IMR-90 (cell line): ENCODE measurements at regions of chr1 and their contacts with region 1.

Region 1: GRCh38 chr1:116377541-116378529 is 4.8 kb downstream of the ATP1A1 start:
- DNase-seq: peak; percentile 96
- ATAC-seq: peak; percentile 21
- H3K4me3 ChIP-seq: peak overlapping the region; percentile 31; the same call in 1 of the 2 replicates
- H3K27ac ChIP-seq: peak overlapping the region; percentile 73
- H3K4me1 ChIP-seq: peaks cover 27% of the 10 kb centered on the region
- H3K27me3 ChIP-seq: no peaks in the 10 kb centered on the region
- CTCF ChIP-seq: no peak
- POLR2A ChIP-seq: no peak; the same call in 1 of the 2 replicates
- RAD21 ChIP-seq: no peak

Region 2: GRCh38 chr1:117674521-117675397 is 1296.9 kb after region 1 on chr1:
- CTCF ChIA-PET with region 1: no interaction called
- POLR2A ChIA-PET with region 1: no interaction called
- dilution Hi-C with region 1: no loop called
- in situ Hi-C with region 1: no loop called
- intact Hi-C with region 1: loop called (anchors 5 kb)
- DNase-seq: peak; percentile 28
- ATAC-seq: no peak
- H3K4me3 ChIP-seq: no peak overlapping the region
- H3K27ac ChIP-seq: no peak overlapping the region
- H3K4me1 ChIP-seq: peaks cover 12% of the 10 kb centered on the region
- H3K27me3 ChIP-seq: no peaks in the 10 kb centered on the region
- CTCF ChIP-seq: peak; percentile 36; the same call in 1 of the 2 replicates
- POLR2A ChIP-seq: no peak
- RAD21 ChIP-seq: no peak